ENCODE measurements at regions of chr17 and their contacts with region 1.

Region 1: GRCh38 chr17:49053171-49053829 is 56.1 kb downstream of the IGF2BP1 start:
- DNase-seq: peak in 1 of 2 experiments; percentile 55
- H3K4me3 ChIP-seq: no peak overlapping the region
- H3K27ac ChIP-seq: no peak overlapping the region
- H3K4me1 ChIP-seq: peaks cover 10 to 23% (median 19%) of the 10 kb centered on the region in 4 experiments
- H3K27me3 ChIP-seq: no peaks in the 10 kb centered on the region
- CTCF ChIP-seq: no peak
- EP300 ChIP-seq: no peak
- POLR2A ChIP-seq: peak; percentile 34 to 58; a peak in 2 of 3 replicates
- RAD21 ChIP-seq: peak in 1 of 2 experiments; percentile 22; a peak in 1 of 4 replicates

Region 2: DNA sequence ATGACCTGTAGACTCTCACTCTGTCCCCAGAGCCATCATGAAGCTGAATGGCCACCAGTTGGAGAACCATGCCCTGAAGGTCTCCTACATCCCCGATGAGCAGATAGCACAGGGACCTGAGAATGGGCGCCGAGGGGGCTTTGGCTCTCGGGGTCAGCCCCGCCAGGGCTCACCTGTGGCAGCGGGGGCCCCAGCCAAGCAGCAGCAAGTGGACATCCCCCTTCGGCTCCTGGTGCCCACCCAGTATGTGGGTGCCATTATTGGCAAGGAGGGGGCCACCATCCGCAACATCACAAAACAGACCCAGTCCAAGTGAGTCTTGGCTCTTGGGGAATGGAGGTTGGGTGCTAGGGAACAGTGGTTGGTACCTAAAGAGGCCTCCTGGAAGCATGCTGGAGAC is 15.2 kb before region 1 on chr17:
- CTCF ChIA-PET with region 1: interaction called, 34 read pairs
- POLR2A ChIA-PET with region 1: interaction called, 28 read pairs
- DNase-seq: no peak
- H3K4me3 ChIP-seq: no peak overlapping the region
- H3K27ac ChIP-seq: no peak overlapping the region
- H3K4me1 ChIP-seq: peaks cover 0 to 6% (median 2%) of the 10 kb centered on the region in 4 experiments; a peak in 2 of 7 replicates
- H3K27me3 ChIP-seq: no peaks in the 10 kb centered on the region
- CTCF ChIP-seq: no peak
- EP300 ChIP-seq: no peak
- POLR2A ChIP-seq: no peak
- RAD21 ChIP-seq: no peak

Region 3: DNA sequence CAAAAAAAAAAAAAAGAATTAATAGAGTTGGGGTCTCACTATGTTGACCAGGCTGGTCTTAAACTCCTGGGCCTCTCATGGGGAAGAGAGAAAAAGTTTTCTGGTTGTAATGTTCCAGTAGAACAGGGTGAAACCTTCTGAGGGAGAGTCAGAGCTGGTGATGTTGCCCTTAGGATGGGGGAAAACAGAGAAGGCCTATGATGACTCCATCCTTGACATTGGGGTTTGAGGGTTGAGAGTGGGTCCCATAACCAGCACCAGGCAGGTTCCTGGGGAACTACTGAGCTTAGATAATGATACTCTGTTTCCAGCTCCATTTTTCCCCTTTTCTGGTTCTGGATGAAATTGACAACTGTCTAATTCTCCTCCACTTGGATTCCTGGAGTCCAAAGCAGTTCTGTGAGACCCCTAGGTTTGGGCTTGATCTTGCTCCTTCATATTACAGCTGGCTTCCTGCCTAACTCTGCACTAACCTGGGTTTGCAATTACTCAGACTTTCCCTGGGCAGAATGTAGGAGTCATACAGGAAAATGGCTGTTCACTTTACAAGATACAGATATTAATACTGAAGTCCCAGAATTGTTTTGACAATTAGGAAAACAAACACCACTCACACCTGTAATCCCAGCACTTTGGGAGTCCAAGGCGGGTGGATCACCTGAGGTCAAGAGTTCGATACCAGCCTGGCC is 16.4 kb after region 1 on chr17:
- CTCF ChIA-PET with region 1: no interaction called
- POLR2A ChIA-PET with region 1: interaction called, 16 read pairs
- DNase-seq: no peak
- H3K4me3 ChIP-seq: no peak overlapping the region
- H3K27ac ChIP-seq: no peak overlapping the region
- H3K4me1 ChIP-seq: peaks cover 0 to 7% (median 0%) of the 10 kb centered on the region in 4 experiments; a peak in 2 of 7 replicates
- H3K27me3 ChIP-seq: no peaks in the 10 kb centered on the region
- CTCF ChIP-seq: no peak
- EP300 ChIP-seq: no peak
- POLR2A ChIP-seq: no peak
- RAD21 ChIP-seq: no peak

Measured in H1 (cell line).